Aorta (tissue), 5 donors: ENCODE measurements at regions of chr10 and their contacts with region 1.

Region 1: GRCh38 chr10:68955832-68956532 is at the start of gene DDX21:
- DNase-seq: peak; percentile 95 to 96
- ATAC-seq: peak; percentile 96
- H3K4me3 ChIP-seq: peak within 1 kb of the TSS; percentile 66 to 83
- H3K27ac ChIP-seq: peak within 1 kb of the TSS in 1 of 2 donors; percentile 97
- H3K4me1 ChIP-seq: peaks cover 0 to 8% of the 10 kb centered on the region in 2 donors
- H3K27me3 ChIP-seq: no peaks in the 10 kb centered on the region
- total RNA-seq, gene DDX21: 34.9 to 52.4 TPM

Region 2: DNA sequence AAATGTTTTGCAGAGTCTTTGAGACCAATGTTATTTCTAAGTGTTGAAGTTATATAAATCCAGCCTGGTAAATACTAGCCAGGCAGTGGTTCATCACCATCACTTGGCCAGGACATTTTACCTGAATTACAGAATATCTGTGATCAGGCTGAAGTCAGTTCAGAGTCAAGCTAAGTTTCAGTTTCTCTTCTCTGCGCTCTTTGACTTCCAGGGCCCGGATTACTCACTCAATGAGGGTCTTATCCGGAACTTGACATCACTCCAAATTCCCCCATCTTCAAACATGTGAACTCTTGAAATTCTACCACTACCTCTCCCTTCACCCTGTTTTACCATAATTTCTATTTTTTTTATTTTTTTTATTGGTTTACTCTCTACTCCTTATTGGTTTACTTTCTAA is 271.6 kb before region 1 on chr10:
- intact Hi-C with region 1: no loop called
- DNase-seq: no peak
- ATAC-seq: no peak
- H3K4me3 ChIP-seq: no peak overlapping the region
- H3K27ac ChIP-seq: no peak overlapping the region
- H3K4me1 ChIP-seq: no peaks in the 10 kb centered on the region
- H3K27me3 ChIP-seq: no peaks in the 10 kb centered on the region

Region 3: DNA sequence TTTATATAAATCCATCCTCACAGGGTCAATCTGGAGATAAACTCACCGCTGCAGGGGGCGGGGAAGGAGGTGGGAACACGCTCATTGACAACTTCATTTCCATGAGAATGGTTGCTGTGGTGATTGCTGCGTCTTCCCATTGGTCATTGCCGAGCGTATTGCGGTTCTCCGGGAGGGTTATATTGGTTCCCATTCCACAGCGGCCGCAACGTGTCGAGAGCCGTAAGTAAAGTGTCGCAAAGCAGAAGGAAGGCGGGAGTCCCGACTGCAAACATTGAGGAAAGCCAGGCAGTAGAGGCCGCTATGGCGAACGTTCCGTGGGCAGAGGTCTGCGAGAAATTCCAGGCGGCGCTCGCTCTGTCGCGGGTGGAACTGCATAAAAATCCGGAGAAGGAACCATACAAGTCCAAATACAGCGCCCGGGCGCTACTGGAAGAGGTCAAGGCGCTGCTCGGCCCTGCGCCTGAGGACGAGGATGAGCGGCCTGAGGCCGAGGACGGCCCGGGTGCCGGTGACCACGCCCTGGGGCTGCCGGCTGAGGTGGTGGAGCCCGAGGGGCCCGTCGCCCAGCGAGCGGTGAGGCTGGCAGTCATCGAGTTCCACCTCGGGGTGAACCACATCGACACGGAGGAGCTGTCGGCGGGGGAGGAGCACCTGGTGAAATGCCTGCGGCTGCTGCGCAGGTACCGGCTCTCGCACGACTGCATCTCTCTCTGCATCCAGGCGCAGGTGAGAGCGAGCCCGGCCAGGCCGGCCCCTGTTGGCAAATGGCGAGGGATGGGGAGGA is 32.7 kb after region 1 on chr10 and contains the start of gene KIFBP:
- intact Hi-C with region 1: loop called in 1 of 2 experiments (anchors 2 kb)
- DNase-seq: peak; percentile 95 to 96
- ATAC-seq: peak; percentile 97
- H3K4me3 ChIP-seq: peak within 1 kb of the TSS; percentile 91 to 96
- H3K27ac ChIP-seq: peak within 1 kb of the TSS; percentile 18 to 85
- H3K4me1 ChIP-seq: no peaks in the 10 kb centered on the region
- H3K27me3 ChIP-seq: no peaks in the 10 kb centered on the region
- total RNA-seq, gene KIFBP: 27.4 to 28.4 TPM